ENCODE measurements at regions of chr19 and their contacts with region 1.

Region 1: GRCh38 chr19:13033819-13034611 is 38.7 kb downstream of the NFIX start:
- DNase-seq: peak in 3 of 5 donors; percentile 23 to 67 (median 29)
- H3K4me3 ChIP-seq: no peak overlapping the region
- H3K4me3 Mint-ChIP-seq: no peak overlapping the region
- H3K27ac ChIP-seq: no peak overlapping the region
- H3K27ac Mint-ChIP-seq: peak overlapping the region in 2 of 8 donors; percentile 70 to 78
- H3K4me1 ChIP-seq: no peaks in the 10 kb centered on the region
- H3K4me1 Mint-ChIP-seq: peaks cover 0 to 4% (median 0%) of the 10 kb centered on the region in 3 donors
- H3K27me3 ChIP-seq: no peaks in the 10 kb centered on the region
- H3K27me3 Mint-ChIP-seq: peaks cover 6 to 22% of the 10 kb centered on the region in 2 donors

Region 2: DNA sequence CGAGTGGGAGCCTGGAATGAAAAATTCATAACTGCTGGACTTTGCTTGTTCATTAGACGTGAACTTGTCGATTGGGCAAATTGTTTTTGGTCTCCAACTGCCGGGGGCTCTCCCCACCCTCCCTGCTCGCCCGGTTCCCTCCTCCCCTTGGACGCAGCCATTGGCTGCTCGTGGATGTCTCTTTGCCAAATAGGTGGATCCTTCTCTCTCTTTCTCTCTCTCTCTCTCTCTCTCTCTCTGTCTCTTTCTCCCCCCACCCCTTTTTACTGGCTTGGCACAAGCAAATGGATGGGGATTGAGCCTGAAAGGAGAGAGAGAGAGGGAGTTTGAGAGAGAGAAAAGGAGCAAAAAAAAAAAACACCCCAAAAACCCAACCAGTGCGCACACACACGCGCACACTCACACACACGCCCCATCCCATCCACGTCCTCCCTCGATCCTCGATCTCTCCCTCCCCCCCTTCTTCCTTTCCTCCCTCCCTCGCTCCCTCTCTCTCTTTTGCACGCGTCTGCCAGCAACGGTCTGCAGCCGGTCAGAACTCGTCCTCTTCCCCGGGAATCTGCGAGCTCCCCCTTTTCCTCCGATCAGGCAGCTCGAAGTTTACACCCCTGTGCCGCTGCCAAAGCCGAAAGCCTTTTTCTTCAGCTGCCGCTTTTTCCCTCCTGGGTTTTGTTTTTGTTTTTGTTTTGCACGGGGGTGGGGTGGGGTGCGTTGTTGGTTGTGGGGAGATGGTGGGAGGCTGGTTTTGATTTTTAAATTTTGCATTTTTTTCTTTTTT is 11.0 kb before region 1 on chr19:
- CTCF ChIA-PET with region 1: no interaction called
- POLR2A ChIA-PET with region 1: no interaction called
- DNase-seq: no peak
- H3K4me3 ChIP-seq: peak overlapping the region; percentile 45
- H3K4me3 Mint-ChIP-seq: peak overlapping the region; percentile 12 to 80 (median 70)
- H3K27ac ChIP-seq: peak overlapping the region; percentile 61
- H3K27ac Mint-ChIP-seq: peak overlapping the region in 4 of 8 donors; percentile 15 to 87 (median 28)
- H3K4me1 ChIP-seq: peaks cover 20% of the 10 kb centered on the region
- H3K4me1 Mint-ChIP-seq: peaks cover 14 to 34% (median 22%) of the 10 kb centered on the region in 3 donors
- H3K27me3 ChIP-seq: peaks cover 21% of the 10 kb centered on the region
- H3K27me3 Mint-ChIP-seq: peaks cover 34 to 63% of the 10 kb centered on the region in 2 donors

Region 3: GRCh38 chr19:13044231-13044836 is 10.3 kb after region 1 on chr19:
- CTCF ChIA-PET with region 1: interaction called, 11 read pairs
- POLR2A ChIA-PET with region 1: no interaction called
- DNase-seq: peak; percentile 44 to 85 (median 60)
- H3K4me3 ChIP-seq: no peak overlapping the region
- H3K4me3 Mint-ChIP-seq: peak overlapping the region; percentile 2 to 80 (median 49)
- H3K27ac ChIP-seq: peak overlapping the region; percentile 64
- H3K27ac Mint-ChIP-seq: peak overlapping the region; percentile 71 to 99 (median 96)
- H3K4me1 ChIP-seq: peaks cover 31% of the 10 kb centered on the region
- H3K4me1 Mint-ChIP-seq: peaks cover 30 to 39% (median 30%) of the 10 kb centered on the region in 3 donors
- H3K27me3 ChIP-seq: no peaks in the 10 kb centered on the region
- H3K27me3 Mint-ChIP-seq: peaks cover 0 to 3% of the 10 kb centered on the region in 2 donors

Region 4: GRCh38 chr19:13069415-13070359 is 35.7 kb after region 1 on chr19:
- CTCF ChIA-PET with region 1: no interaction called
- POLR2A ChIA-PET with region 1: no interaction called
- DNase-seq: no peak
- H3K4me3 ChIP-seq: no peak overlapping the region
- H3K4me3 Mint-ChIP-seq: no peak overlapping the region
- H3K27ac ChIP-seq: peak overlapping the region; percentile 69
- H3K27ac Mint-ChIP-seq: no peak overlapping the region
- H3K4me1 ChIP-seq: no peaks in the 10 kb centered on the region
- H3K4me1 Mint-ChIP-seq: no peaks in the 10 kb centered on the region
- H3K27me3 ChIP-seq: no peaks in the 10 kb centered on the region
- H3K27me3 Mint-ChIP-seq: peaks cover 5 to 6% of the 10 kb centered on the region in 2 donors

Region 5: DNA sequence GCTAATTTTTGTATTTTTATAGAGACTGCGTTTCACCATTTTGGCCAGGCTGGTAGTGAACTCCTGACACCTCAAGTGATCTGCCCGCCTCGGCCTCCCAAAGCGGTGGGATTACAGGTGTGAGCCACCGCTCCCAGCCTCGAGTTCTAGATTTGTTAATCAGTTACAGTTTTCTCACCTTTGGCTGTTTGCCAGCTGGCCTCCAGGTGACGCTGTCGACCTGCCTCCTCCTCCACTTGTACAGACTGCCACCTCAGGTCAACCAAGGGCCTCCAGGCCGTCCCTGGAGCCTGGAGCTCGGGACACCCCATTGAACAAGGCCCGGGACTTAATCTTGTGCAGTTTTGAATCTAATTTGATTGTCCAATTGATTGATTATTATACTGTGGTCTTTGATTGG is 161.7 kb after region 1 on chr19:
- CTCF ChIA-PET with region 1: no interaction called
- POLR2A ChIA-PET with region 1: no interaction called
- DNase-seq: peak; percentile 33 to 71 (median 39)
- H3K4me3 ChIP-seq: no peak overlapping the region
- H3K4me3 Mint-ChIP-seq: peak overlapping the region in 2 of 7 donors; percentile 47 to 70
- H3K27ac ChIP-seq: no peak overlapping the region
- H3K27ac Mint-ChIP-seq: peak overlapping the region in 6 of 8 donors; percentile 37 to 87 (median 66)
- H3K4me1 ChIP-seq: peaks cover 35% of the 10 kb centered on the region
- H3K4me1 Mint-ChIP-seq: peaks cover 22 to 26% (median 25%) of the 10 kb centered on the region in 3 donors
- H3K27me3 ChIP-seq: no peaks in the 10 kb centered on the region
- H3K27me3 Mint-ChIP-seq: no peaks in the 10 kb centered on the region

Region 6: DNA sequence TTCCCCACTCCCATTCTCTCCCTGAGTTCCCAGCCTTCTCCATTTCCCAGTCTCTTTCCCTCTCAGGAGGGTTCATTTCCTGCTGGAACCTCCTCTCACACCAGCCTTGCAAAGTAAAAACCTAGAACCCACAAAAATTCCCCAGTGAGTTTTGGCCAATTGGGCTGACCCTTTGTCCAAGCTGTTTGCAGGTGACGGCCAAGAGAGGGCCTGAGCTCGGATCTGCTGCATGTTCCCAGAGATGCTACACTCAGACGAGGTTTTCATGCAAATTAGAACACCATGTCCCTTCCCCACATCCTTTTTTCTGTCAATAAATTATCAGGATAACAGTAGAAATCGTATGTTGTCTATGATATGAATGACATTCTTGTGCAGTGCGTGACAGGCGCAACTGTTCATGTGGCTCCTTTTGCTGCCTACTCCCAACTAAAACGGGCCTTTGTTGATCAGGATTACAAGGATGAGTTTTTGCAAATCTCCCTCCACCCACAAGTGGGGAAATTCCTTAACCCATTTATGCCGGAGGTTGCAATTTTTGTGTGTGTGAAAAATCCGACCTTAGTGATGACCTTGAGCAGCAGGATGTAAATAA is 322.8 kb after region 1 on chr19:
- CTCF ChIA-PET with region 1: no interaction called
- POLR2A ChIA-PET with region 1: no interaction called
- DNase-seq: no peak
- H3K4me3 ChIP-seq: no peak overlapping the region
- H3K4me3 Mint-ChIP-seq: no peak overlapping the region
- H3K27ac ChIP-seq: no peak overlapping the region
- H3K27ac Mint-ChIP-seq: no peak overlapping the region
- H3K4me1 ChIP-seq: no peaks in the 10 kb centered on the region
- H3K4me1 Mint-ChIP-seq: no peaks in the 10 kb centered on the region
- H3K27me3 ChIP-seq: no peaks in the 10 kb centered on the region
- H3K27me3 Mint-ChIP-seq: peaks cover 31 to 40% of the 10 kb centered on the region in 2 donors